MCF 10A (cell line): ENCODE measurements at regions of chr1 and their contacts with region 1.

Region 1: DNA sequence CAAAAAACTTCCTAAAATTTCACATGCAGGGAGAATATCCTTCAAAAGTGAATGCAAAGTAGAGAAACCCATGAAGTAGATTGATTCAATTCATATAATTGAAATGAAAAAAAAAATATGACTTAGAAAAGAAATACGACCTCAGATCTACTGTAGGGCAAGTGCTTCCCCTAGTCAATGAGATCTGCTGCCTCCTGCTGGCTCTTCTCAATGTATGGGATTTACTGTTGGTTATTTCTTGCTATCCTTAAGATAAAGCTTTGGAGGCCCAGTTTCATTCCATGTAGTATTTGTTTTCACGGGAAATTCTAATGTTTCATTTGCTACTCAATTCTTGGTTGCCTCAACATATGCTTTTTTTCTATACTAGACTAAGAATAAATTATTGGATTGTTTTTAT is 46.2 kb downstream of the ZNF648 start:
- DNase-seq: no peak
- H3K4me3 Mint-ChIP-seq: no peak overlapping the region
- H3K27ac Mint-ChIP-seq: no peak overlapping the region
- H3K4me1 Mint-ChIP-seq: no peaks in the 10 kb centered on the region
- H3K27me3 Mint-ChIP-seq: no peaks in the 10 kb centered on the region
- CTCF ChIP-seq: no peak

Region 2: GRCh38 chr1:181947441-181947840 is 67.9 kb before region 1 on chr1:
- CTCF ChIA-PET with region 1: no interaction called
- POLR2A ChIA-PET with region 1: no interaction called
- intact Hi-C with region 1: no loop called
- DNase-seq: no peak
- H3K4me3 Mint-ChIP-seq: no peak overlapping the region
- H3K27ac Mint-ChIP-seq: no peak overlapping the region
- H3K4me1 Mint-ChIP-seq: no peaks in the 10 kb centered on the region
- H3K27me3 Mint-ChIP-seq: peaks cover 38% of the 10 kb centered on the region
- CTCF ChIP-seq: no peak

Region 3: DNA sequence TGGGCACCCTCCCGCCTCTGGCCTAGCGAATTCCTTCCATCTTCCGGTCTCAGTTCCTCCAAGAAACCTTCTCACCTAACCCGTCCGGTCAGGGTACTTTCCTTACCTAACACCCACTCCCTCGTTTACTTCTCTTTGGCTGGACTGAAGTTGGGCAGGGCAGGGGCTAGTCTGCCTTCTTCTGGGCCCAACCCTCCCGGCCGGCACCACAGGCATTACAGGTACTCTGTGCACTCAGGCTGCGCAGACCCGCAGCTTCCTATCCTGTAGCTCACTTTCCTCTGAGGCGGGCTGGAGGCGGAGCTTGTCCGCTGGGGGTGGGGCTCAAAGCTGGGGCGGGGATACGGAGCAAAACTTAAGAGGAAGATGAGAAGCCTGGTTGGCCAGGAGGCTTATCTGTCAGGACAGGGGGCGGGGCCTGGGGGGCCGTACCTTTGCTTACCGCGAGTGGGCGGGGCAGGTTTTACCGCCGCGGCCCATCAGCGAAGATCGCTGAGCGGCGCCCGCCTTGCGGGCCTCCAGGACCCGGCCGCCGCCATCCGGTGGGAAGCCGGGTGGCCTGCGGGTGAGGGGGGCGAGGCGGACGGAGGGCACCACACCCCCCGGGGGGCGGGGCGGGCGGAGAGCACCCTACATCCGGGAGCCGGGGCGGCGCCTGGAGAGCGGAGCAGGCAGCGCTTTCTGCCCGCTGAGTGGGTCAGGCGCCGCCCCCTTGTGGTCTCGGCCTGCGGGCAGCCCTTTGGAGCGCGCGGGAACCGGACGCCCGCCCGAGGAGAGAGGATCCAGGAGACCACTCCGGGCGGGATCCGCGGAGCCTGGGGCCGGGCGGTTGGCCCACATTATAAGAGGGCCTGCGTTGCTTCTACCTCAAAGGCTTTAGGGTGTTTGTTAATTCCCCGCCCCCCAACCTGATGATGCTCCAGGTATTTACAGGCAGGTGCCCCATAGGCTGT is 14.3 kb after region 1 on chr1:
- CTCF ChIA-PET with region 1: interaction called, 3 read pairs
- POLR2A ChIA-PET with region 1: interaction called, 17 read pairs
- intact Hi-C with region 1: no loop called
- DNase-seq: peak; percentile 99
- H3K4me3 Mint-ChIP-seq: peak overlapping the region; percentile 85
- H3K27ac Mint-ChIP-seq: peak overlapping the region; percentile 91
- H3K4me1 Mint-ChIP-seq: peaks cover 10% of the 10 kb centered on the region
- H3K27me3 Mint-ChIP-seq: no peaks in the 10 kb centered on the region
- CTCF ChIP-seq: peak; percentile 42